OCI-LY7 (cell line): ENCODE measurements at regions of chr10 and their contacts with region 1.

Region 1: GRCh38 chr10:102835007-102835482 is 2.2 kb downstream of the CYP17A1 start:
- DNase-seq: peak; percentile 80
- H3K4me3 ChIP-seq: no peak overlapping the region
- H3K27ac ChIP-seq: no peak overlapping the region
- H3K4me1 ChIP-seq: no peaks in the 10 kb centered on the region
- CTCF ChIP-seq: peak; percentile 91

Region 2: DNA sequence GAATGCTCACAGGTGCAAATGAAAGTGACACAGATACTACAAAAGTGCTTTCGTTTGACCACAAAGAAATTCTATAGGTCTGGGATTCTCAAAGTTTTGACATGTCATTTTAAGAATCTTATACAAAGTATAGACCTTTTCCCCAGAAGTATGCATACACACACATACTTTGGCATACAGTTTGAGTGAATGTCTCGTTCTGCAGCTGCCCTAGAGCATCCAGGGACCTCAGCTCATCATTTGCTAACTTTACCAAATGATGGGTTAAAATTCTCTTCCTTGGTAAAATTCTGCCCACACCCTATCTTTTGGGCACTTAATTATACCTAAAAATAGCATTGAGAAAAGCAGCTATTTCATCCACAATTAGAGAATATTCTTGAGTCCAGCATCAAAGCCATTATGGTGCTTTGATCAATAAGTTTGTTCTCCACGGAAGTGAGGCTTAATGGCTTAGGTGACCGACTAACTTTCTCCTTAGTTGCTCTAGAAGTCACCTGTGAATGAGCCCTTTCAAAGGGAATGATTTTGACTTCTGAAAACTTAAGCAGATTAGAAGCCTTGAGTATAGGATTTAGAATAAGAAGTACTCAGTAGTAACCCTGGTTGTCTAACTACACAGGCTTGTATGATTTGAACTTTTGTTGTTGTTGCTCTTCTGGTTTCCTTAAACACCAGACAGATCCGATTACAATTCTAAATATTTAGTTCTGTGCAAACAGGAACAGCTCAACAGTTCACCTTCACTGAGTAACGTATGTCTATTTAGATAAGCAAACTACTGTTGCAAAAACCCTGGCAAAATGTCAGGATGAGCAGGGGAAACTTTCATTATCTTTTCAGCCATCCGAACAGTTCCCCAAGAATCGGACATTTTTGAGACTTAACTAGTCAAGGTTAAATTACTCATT is 153.6 kb after region 1 on chr10:
- CTCF ChIA-PET with region 1: no interaction called
- POLR2A ChIA-PET with region 1: no interaction called
- intact Hi-C with region 1: no loop called
- DNase-seq: no peak
- H3K4me3 ChIP-seq: no peak overlapping the region
- H3K27ac ChIP-seq: no peak overlapping the region
- H3K4me1 ChIP-seq: no peaks in the 10 kb centered on the region
- CTCF ChIP-seq: no peak

Region 3: GRCh38 chr10:103069453-103070331 is 234.6 kb after region 1 on chr10:
- CTCF ChIA-PET with region 1: no interaction called
- POLR2A ChIA-PET with region 1: interaction called, 3 read pairs
- intact Hi-C with region 1: loop called (anchors 2 kb)
- DNase-seq: peak; percentile 81
- H3K4me3 ChIP-seq: no peak overlapping the region
- H3K27ac ChIP-seq: peak overlapping the region; percentile 7
- H3K4me1 ChIP-seq: peaks cover 21% of the 10 kb centered on the region
- CTCF ChIP-seq: peak; percentile 95